ENCODE measurements at regions of chr9 and their contacts with region 1.

Region 1: DNA sequence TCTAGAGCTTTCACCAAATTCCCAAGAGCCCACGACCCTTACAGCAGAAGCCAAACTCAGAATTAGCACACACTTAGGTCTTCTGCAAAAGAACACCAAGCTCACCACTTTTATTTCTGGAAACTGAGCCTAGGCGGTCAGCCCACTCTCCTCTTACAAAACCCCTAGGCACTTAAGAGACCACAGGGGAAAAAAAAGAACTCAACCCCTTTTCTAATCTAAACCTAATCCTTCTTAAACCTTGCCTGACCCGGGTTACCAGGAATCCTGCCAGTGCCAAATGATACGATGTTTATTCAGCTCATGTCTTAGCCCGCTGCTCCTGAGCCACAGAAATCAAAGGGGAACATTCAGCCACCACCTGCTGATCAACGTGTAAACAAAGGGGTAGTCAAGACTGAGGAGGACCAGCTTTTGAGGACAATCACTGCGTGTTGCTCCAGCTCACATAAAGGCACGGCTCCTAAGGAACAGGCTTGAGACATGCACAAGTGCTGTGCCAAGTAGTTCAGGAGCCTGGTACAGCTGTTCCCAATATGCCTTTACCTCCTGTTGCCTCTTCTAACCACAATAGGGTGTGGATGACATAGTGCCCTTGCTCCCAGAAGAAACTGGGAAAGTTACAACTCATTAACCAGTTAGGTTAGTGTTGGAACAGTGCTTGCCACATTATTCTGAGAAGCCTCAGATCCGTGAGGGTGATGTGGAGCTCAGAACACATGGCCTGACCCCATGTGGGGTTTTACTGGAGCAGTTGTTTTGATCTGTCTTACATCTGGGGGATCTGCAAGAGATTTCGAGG is 49.3 kb downstream of the ZFAND5 start:
- DNase-seq: peak; percentile 88 to 90
- ATAC-seq: peak; percentile 84 to 92
- H3K4me3 ChIP-seq: peak overlapping the region; percentile 24 to 55 (median 31)
- H3K27ac ChIP-seq: peak overlapping the region; percentile 88 to 89 (median 88)
- H3K4me1 ChIP-seq: peaks cover 25 to 35% of the 10 kb centered on the region in 2 donors
- H3K27me3 ChIP-seq: no peaks in the 10 kb centered on the region
- CTCF ChIP-seq: no peak
- POLR2A ChIP-seq: peak in 1 of 2 donors; percentile 34

Region 2: GRCh38 chr9:71431931-71432330 is 883.8 kb before region 1 on chr9:
- in situ Hi-C with region 1: no loop called
- intact Hi-C with region 1: no loop called
- DNase-seq: no peak
- ATAC-seq: no peak
- H3K4me3 ChIP-seq: no peak overlapping the region
- H3K27ac ChIP-seq: no peak overlapping the region
- H3K4me1 ChIP-seq: no peaks in the 10 kb centered on the region
- H3K27me3 ChIP-seq: no peaks in the 10 kb centered on the region
- CTCF ChIP-seq: no peak
- POLR2A ChIP-seq: no peak

Region 3: DNA sequence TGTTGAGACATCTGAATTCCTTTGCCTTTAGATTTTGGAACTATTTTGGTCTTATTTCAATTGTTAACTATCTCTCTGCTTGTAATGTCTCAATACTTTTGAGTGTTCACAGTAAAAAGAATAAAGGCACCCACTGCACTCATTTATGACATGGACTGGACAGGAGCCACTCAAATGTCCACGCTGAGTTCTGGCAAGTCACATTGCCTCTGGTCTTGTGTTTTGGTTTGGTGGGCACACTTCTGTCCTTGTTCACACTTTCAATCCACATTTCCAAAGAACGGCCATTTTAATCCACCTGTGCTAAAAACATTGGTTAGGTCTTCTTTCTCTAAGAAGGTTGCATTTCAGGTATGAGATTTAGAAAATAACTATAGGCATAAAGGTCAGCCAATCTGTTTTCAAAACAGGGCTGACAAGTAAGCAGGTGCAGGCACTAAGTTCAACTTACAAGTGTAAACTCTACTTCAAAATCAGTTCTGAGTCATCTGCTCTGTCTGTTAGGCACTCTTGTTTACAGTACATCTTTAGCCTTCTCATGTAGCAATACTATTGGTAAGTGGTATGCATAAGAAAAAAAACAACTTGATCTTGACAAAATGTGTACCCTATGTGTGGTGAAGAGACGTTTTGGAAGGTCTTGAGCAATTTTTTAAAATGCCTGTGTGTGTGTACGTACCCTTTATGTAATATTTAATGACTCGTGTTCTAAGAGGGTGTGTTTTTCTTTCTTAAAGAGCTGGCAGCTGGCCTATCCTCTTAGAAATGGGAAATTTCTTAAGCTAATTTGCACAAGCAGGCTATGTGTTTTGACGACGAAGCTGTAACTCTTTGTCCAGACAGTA is 80.8 kb after region 1 on chr9:
- in situ Hi-C with region 1: no loop called
- intact Hi-C with region 1: loop called (anchors 5 kb)
- DNase-seq: peak in 1 of 2 donors; percentile 19
- ATAC-seq: peak; percentile 95 to 100
- H3K4me3 ChIP-seq: peak overlapping the region in 2 of 4 donors; percentile 3 to 24
- H3K27ac ChIP-seq: peak overlapping the region; percentile 72 to 83 (median 82)
- H3K4me1 ChIP-seq: peaks cover 5 to 17% of the 10 kb centered on the region in 2 donors
- H3K27me3 ChIP-seq: no peaks in the 10 kb centered on the region
- CTCF ChIP-seq: peak in 1 of 5 experiments; percentile 10
- POLR2A ChIP-seq: peak in 1 of 2 donors; percentile 25

Region 4: GRCh38 chr9:72871685-72872084 is 556.0 kb after region 1 on chr9:
- in situ Hi-C with region 1: no loop called
- intact Hi-C with region 1: no loop called
- DNase-seq: no peak
- ATAC-seq: no peak
- H3K4me3 ChIP-seq: peak overlapping the region in 2 of 4 donors; percentile 30 to 32
- H3K27ac ChIP-seq: no peak overlapping the region
- H3K4me1 ChIP-seq: peaks cover 6 to 20% of the 10 kb centered on the region in 2 donors
- H3K27me3 ChIP-seq: no peaks in the 10 kb centered on the region
- CTCF ChIP-seq: peak; percentile 49 to 53 (median 50)
- POLR2A ChIP-seq: no peak